Endothelial cell of umbilical vein (primary cell): ENCODE measurements at regions of chr22 and their contacts with region 1.

Region 1: GRCh38 chr22:46845296-46846149 is 83.1 kb downstream of the TBC1D22A start:
- DNase-seq: peak; percentile 76
- H3K4me3 ChIP-seq: peak overlapping the region in 2 of 3 experiments; percentile 14 to 61
- H3K27ac ChIP-seq: peak overlapping the region; percentile 14
- H3K4me1 ChIP-seq: peaks cover 16% of the 10 kb centered on the region
- H3K27me3 ChIP-seq: no peaks in the 10 kb centered on the region
- CTCF ChIP-seq: peak; percentile 22 to 44
- POLR2A ChIP-seq: no peak

Region 2: DNA sequence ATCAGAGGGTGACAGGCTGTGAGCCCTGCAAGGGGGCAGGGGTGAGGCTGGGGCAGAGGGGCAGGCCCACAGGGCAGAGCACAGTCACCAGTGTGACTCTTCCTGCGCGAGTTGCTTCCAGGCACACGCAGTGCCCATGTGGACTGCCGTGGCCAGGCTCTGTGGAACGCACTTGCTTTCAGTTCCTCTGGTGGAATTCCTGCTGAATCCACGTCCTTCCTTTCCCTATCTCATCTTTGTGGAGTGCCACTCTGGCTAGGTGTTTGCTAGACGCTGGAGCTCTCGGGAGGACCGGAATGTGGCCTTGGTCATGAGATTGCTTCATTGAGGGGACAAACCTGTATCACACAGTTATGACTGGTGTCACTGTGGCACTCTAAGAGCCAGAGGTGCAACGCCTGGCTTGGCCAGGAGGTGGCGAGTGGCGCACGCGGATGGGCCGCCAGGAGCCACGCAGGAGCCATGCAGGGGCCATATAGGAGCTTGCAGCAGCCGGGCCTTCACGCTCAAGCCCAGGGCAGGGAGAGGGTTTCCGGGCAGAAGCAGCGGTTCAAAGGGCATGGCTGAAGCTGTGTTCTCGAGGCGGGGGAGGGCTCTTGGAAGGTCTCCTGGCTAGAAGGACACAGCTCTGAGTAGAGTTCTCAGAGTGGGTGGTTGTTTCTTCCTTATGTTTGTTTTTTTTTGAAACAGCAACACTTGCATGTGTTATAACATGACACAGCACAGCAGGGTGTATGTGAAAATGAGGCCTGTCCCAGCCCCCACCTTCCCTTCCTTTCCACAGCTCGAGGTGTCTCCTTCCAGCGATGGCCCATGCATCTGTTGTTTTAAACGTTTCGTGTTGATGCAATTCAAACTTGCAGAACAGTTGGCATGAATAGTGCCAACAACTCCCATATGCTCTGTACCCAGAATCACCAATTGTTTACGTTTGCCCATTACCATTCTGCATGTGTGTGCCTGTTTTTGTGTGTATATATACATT is 46.9 kb before region 1 on chr22:
- CTCF ChIA-PET with region 1: interaction called, 13 read pairs
- POLR2A ChIA-PET with region 1: no interaction called
- dilution Hi-C with region 1: no loop called
- intact Hi-C with region 1: no loop called
- DNase-seq: peak; percentile 81
- H3K4me3 ChIP-seq: no peak overlapping the region
- H3K27ac ChIP-seq: no peak overlapping the region
- H3K4me1 ChIP-seq: peaks cover 5% of the 10 kb centered on the region
- H3K27me3 ChIP-seq: no peaks in the 10 kb centered on the region
- CTCF ChIP-seq: peak; percentile 96 to 98
- POLR2A ChIP-seq: no peak

Region 3: GRCh38 chr22:46857142-46857884 is 11.8 kb after region 1 on chr22:
- CTCF ChIA-PET with region 1: interaction called, 12 read pairs
- POLR2A ChIA-PET with region 1: no interaction called
- dilution Hi-C with region 1: no loop called
- intact Hi-C with region 1: no loop called
- DNase-seq: no peak
- H3K4me3 ChIP-seq: no peak overlapping the region
- H3K27ac ChIP-seq: no peak overlapping the region
- H3K4me1 ChIP-seq: peaks cover 11% of the 10 kb centered on the region
- H3K27me3 ChIP-seq: no peaks in the 10 kb centered on the region
- CTCF ChIP-seq: no peak
- POLR2A ChIP-seq: no peak

Region 4: DNA sequence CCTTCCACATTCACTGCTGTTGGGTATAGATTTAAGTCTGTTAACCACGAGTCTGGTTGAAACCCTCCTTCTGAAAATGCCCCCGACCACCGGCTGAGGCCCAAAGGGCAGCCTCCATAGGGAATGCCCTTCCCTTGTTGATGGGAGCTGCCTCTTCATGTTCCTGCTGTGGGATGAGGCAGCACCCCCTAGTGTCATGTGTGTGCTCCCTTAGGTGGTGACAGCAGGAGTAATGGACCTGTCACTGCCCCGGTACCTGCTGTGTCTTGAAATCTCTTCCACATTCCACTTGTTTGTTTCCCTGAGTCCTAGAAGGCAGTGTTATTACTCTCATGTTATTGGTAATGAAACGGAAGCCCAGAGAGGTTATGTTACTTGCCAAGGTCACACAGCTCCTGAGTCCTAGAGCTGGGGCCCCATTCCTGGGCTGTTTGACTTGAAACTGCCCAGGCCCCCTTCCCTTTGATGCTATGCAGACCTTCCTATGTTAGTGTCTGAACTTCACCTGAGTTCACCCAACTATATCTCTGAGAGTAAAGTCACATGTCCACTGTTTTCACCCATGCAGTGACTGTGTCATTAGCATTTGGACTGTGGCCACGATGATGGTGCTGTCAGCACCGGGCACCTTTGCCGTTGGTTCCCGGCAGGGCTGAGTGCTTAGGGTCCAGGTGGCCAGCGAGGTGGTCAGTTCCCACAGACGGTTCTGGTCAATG is 151.2 kb after region 1 on chr22:
- CTCF ChIA-PET with region 1: interaction called, 28 read pairs
- POLR2A ChIA-PET with region 1: no interaction called
- dilution Hi-C with region 1: no loop called
- intact Hi-C with region 1: loop called (anchors 5 kb)
- DNase-seq: peak; percentile 9
- H3K4me3 ChIP-seq: no peak overlapping the region
- H3K27ac ChIP-seq: no peak overlapping the region
- H3K4me1 ChIP-seq: no peaks in the 10 kb centered on the region
- H3K27me3 ChIP-seq: no peaks in the 10 kb centered on the region
- CTCF ChIP-seq: peak in 1 of 2 donors; percentile 32
- POLR2A ChIP-seq: no peak

Region 5: GRCh38 chr22:47168900-47169800 is 323.6 kb after region 1 on chr22:
- CTCF ChIA-PET with region 1: interaction called, 7 read pairs
- POLR2A ChIA-PET with region 1: no interaction called
- dilution Hi-C with region 1: no loop called
- intact Hi-C with region 1: loop called (anchors 1 kb)
- DNase-seq: peak; percentile 11
- H3K4me3 ChIP-seq: no peak overlapping the region
- H3K27ac ChIP-seq: no peak overlapping the region
- H3K4me1 ChIP-seq: peaks cover 11% of the 10 kb centered on the region
- H3K27me3 ChIP-seq: no peaks in the 10 kb centered on the region
- CTCF ChIP-seq: peak; percentile 24 to 37
- POLR2A ChIP-seq: no peak